Right cardiac atrium (tissue), 5 donors: ENCODE measurements at regions of chr4 and their contacts with region 1.

Region 1: DNA sequence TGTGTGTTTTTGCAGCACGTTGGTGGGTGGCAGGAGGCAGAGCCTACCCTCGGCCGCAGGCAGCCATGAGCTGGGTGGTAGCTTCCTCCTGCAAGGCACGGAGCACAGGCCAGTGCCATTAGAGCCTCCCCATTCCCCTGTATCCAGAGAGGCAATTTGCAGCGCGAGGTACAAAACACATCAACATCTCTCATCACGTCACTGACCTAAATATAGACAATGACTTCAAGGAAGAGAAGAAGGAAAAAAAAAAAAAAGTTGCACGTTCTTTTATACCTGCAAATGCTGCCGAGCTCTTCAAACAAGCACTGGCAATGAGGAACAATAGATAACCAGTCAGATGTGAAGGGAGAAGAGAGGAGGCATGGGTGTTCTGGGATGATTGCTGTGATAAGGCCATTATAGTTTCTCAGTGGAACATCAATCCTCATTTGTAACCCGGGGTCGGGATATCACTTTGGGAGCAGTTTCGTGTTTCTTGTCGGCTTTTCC is 159.9 kb downstream of the MGST2 start:
- DNase-seq: no peak
- ATAC-seq: peak; percentile 32 to 53
- H3K4me3 ChIP-seq: no peak overlapping the region
- H3K27ac ChIP-seq: peak overlapping the region; percentile 48
- H3K4me1 ChIP-seq: peaks cover 4% of the 10 kb centered on the region
- H3K27me3 ChIP-seq: no peaks in the 10 kb centered on the region

Region 2: GRCh38 chr4:139740531-139741041 is 85.0 kb before region 1 on chr4:
- intact Hi-C with region 1: loop called in 1 of 4 experiments (anchors 10 kb)
- DNase-seq: peak; percentile 78 to 89 (median 83)
- ATAC-seq: peak; percentile 96
- H3K4me3 ChIP-seq: no peak overlapping the region
- H3K27ac ChIP-seq: peak overlapping the region; percentile 69
- H3K4me1 ChIP-seq: peaks cover 9% of the 10 kb centered on the region
- H3K27me3 ChIP-seq: no peaks in the 10 kb centered on the region